H1 (cell line): ENCODE measurements at regions of chr11 and their contacts with region 1.

Region 1: GRCh38 chr11:133619973-133620372 is 87.7 kb upstream of the OPCML start:
- DNase-seq: peak in 1 of 2 experiments; percentile 23
- H3K4me3 ChIP-seq: no peak overlapping the region
- H3K27ac ChIP-seq: no peak overlapping the region
- H3K4me1 ChIP-seq: peaks cover 0 to 5% (median 0%) of the 10 kb centered on the region in 4 experiments; a peak in 1 of 7 replicates
- H3K27me3 ChIP-seq: no peaks in the 10 kb centered on the region
- CTCF ChIP-seq: peak in 2 of 3 experiments; percentile 15 to 20; a peak in 2 of 4 replicates
- EP300 ChIP-seq: no peak
- POLR2A ChIP-seq: no peak
- RAD21 ChIP-seq: peak; percentile 27 to 50; a peak in 3 of 4 replicates

Region 2: GRCh38 chr11:133418218-133418617 is 201.8 kb before region 1 on chr11:
- CTCF ChIA-PET with region 1: no interaction called
- POLR2A ChIA-PET with region 1: no interaction called
- DNase-seq: no peak
- H3K4me3 ChIP-seq: no peak overlapping the region
- H3K27ac ChIP-seq: no peak overlapping the region
- H3K4me1 ChIP-seq: no peaks in the 10 kb centered on the region
- H3K27me3 ChIP-seq: no peaks in the 10 kb centered on the region
- CTCF ChIP-seq: no peak
- EP300 ChIP-seq: no peak
- POLR2A ChIP-seq: no peak
- RAD21 ChIP-seq: no peak

Region 3: GRCh38 chr11:133576351-133576750 is 43.6 kb before region 1 on chr11:
- CTCF ChIA-PET with region 1: interaction called, 24 read pairs
- POLR2A ChIA-PET with region 1: no interaction called
- DNase-seq: peak in 1 of 2 experiments; percentile 91
- H3K4me3 ChIP-seq: no peak overlapping the region
- H3K27ac ChIP-seq: no peak overlapping the region
- H3K4me1 ChIP-seq: peaks cover 0 to 10% (median 6%) of the 10 kb centered on the region in 4 experiments; a peak in 4 of 7 replicates
- H3K27me3 ChIP-seq: no peaks in the 10 kb centered on the region; a peak in 2 of 7 replicates
- CTCF ChIP-seq: peak; percentile 78 to 87 (median 85)
- EP300 ChIP-seq: no peak
- POLR2A ChIP-seq: no peak
- RAD21 ChIP-seq: peak; percentile 77 to 83

Region 4: GRCh38 chr11:133636711-133637355 is 16.9 kb after region 1 on chr11:
- CTCF ChIA-PET with region 1: interaction called, 33 read pairs
- POLR2A ChIA-PET with region 1: no interaction called
- DNase-seq: no peak
- H3K4me3 ChIP-seq: no peak overlapping the region
- H3K27ac ChIP-seq: no peak overlapping the region
- H3K4me1 ChIP-seq: peaks cover 6 to 17% (median 12%) of the 10 kb centered on the region in 4 experiments
- H3K27me3 ChIP-seq: no peaks in the 10 kb centered on the region; a peak in 1 of 7 replicates
- CTCF ChIP-seq: no peak
- EP300 ChIP-seq: no peak
- POLR2A ChIP-seq: no peak
- RAD21 ChIP-seq: no peak

Region 5: DNA sequence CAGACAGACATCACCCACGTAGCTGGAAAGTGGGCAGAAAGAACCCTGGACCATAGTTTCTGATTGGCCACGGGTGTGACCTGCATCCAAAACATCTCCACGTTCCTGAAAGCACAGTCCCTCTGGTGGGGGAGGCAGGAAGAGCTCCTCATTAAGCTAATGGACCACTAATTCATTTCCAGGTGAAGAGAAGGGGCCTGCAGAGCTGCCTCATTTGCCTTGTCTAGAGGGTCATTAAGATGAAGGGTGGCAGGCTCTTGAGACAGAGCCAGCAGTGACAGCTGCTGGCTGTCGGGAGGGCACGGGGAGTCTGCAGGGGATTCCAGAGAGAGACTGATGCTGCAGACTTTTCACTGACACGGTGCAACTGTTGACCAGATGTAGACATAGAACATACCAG is 61.9 kb after region 1 on chr11:
- CTCF ChIA-PET with region 1: interaction called, 30 read pairs
- POLR2A ChIA-PET with region 1: no interaction called
- DNase-seq: peak in 1 of 2 experiments; percentile 54
- H3K4me3 ChIP-seq: no peak overlapping the region
- H3K27ac ChIP-seq: no peak overlapping the region
- H3K4me1 ChIP-seq: peaks cover 0 to 3% (median under 1%) of the 10 kb centered on the region in 4 experiments; a peak in 1 of 7 replicates
- H3K27me3 ChIP-seq: no peaks in the 10 kb centered on the region
- CTCF ChIP-seq: peak; percentile 44 to 58 (median 50); a peak in 3 of 4 replicates
- EP300 ChIP-seq: no peak
- POLR2A ChIP-seq: no peak
- RAD21 ChIP-seq: peak; percentile 48 to 69

Region 6: DNA sequence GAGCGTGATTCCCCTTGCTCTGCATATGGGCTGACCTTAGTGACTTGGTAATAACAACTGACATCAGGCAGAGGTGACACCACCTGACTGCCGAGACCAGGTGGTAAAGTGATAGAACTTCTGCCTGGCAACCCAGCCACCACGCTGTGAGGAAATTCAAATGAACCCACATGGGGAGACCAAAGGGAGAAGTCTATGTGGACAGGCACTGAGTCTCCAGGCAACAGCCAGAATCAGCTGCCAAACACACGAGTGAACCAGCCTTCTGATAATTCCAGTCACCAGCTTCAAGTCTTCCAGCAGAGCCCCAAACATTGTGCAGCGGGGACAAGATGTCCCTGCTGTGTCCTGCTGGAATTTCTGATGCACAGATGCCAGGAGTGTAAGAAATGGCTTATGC is 195.7 kb after region 1 on chr11:
- CTCF ChIA-PET with region 1: interaction called, 31 read pairs
- POLR2A ChIA-PET with region 1: no interaction called
- DNase-seq: no peak
- H3K4me3 ChIP-seq: no peak overlapping the region
- H3K27ac ChIP-seq: no peak overlapping the region
- H3K4me1 ChIP-seq: peaks cover 2 to 10% (median 7%) of the 10 kb centered on the region in 4 experiments; a peak in 6 of 7 replicates
- H3K27me3 ChIP-seq: no peaks in the 10 kb centered on the region; a peak in 1 of 7 replicates
- CTCF ChIP-seq: no peak
- EP300 ChIP-seq: no peak
- POLR2A ChIP-seq: no peak
- RAD21 ChIP-seq: no peak

Region 7: DNA sequence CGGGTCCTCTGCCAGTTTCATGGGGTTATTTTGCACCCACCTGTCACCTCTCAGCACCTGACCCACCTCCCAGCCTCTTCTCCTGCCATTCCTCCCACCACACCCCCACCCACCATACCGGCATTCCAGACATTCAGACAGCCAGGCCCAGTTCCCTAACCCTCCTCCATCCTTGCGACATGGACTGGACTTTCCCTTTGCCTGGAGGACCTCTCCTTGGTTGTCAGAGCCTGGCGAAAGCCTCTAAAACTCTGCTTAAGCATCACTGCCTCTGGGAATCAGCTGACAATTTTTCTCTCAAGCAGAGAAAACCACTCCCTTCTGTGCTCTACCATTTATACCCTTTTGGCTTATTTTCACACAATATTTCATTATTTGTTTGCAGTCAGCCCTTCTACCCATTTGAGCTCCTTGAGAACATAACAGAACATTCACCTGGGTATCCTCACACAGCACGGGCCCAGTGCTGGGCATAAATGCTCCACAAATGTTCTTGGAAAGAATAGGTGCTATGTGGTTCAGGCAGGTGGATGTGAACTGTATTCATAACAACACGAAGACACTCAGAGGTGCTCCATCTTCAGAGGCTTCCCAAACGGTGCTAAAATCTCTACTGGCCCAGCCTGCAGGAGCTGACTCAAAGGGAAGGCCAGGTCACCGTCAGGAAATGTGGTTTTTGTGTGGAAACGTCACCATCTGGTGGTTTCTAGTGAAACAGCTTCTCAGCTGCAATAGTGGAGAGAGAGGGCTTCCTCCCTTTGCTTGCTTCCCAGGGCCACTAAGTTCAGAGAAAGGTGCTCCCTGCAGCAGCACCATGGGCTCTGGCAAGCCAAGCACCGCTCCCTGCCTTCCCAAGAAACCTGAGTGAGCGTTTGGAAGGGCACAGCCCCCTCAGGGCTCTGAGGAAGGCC is 215.0 kb after region 1 on chr11:
- CTCF ChIA-PET with region 1: interaction called, 65 read pairs
- POLR2A ChIA-PET with region 1: no interaction called
- DNase-seq: peak; percentile 68 to 78
- H3K4me3 ChIP-seq: no peak overlapping the region
- H3K27ac ChIP-seq: no peak overlapping the region
- H3K4me1 ChIP-seq: peaks cover 0 to 2% (median 0%) of the 10 kb centered on the region in 4 experiments; a peak in 3 of 7 replicates
- H3K27me3 ChIP-seq: no peaks in the 10 kb centered on the region
- CTCF ChIP-seq: peak; percentile 58 to 93 (median 89)
- EP300 ChIP-seq: no peak
- POLR2A ChIP-seq: no peak
- RAD21 ChIP-seq: peak; percentile 97